ENCODE measurements at regions of chr13 and their contacts with region 1.

Region 1: DNA sequence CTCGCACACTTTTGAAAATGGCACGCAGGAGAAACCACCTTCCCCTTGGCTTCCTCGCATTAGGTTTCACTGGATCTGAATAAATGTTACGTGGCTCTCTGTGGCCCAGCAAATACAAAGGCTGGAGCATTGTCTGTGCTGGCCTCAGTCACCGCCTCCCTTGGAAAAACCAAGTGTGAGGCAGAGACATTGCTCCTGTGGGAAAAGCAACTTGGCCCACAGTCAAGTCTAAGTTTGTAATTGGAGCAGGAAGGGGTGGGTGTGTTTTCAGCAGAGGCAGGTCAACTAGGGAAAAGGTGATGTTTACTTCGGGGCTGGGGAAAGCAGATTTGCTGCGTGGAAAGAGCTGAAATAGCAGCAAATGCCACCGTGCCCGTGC is 101.6 kb downstream of the IRS2 start:
- DNase-seq: peak in 1 of 2 donors; percentile 26
- H3K4me3 ChIP-seq: peak overlapping the region in 2 of 3 donors; percentile 17 to 53
- H3K27ac ChIP-seq: peak overlapping the region; percentile 56 to 77
- H3K4me1 ChIP-seq: peaks cover 0 to 3% of the 10 kb centered on the region in 2 donors
- H3K27me3 ChIP-seq: no peaks in the 10 kb centered on the region
- CTCF ChIP-seq: no peak
- POLR2A ChIP-seq: no peak

Region 2: GRCh38 chr13:109700176-109700575 is 15.4 kb after region 1 on chr13:
- intact Hi-C with region 1: no loop called
- DNase-seq: peak in 1 of 2 donors; percentile 45
- H3K4me3 ChIP-seq: no peak overlapping the region
- H3K27ac ChIP-seq: no peak overlapping the region
- H3K4me1 ChIP-seq: no peaks in the 10 kb centered on the region
- H3K27me3 ChIP-seq: no peaks in the 10 kb centered on the region
- CTCF ChIP-seq: no peak
- POLR2A ChIP-seq: no peak

Region 3: GRCh38 chr13:109778102-109778542 is 93.3 kb after region 1 on chr13:
- intact Hi-C with region 1: loop called (anchors 5 kb)
- DNase-seq: no peak
- H3K4me3 ChIP-seq: peak overlapping the region in 2 of 3 donors; percentile 81 to 97
- H3K27ac ChIP-seq: peak overlapping the region; percentile 41 to 81
- H3K4me1 ChIP-seq: peaks cover 0 to 8% of the 10 kb centered on the region in 2 donors
- H3K27me3 ChIP-seq: no peaks in the 10 kb centered on the region
- CTCF ChIP-seq: no peak
- POLR2A ChIP-seq: no peak

Measured in breast epithelium (tissue), 4 donors.